Naive thymus-derived CD4-positive, alpha-beta T cell (primary cell): ENCODE measurements at regions of chr20 and their contacts with region 1.

Region 1: DNA sequence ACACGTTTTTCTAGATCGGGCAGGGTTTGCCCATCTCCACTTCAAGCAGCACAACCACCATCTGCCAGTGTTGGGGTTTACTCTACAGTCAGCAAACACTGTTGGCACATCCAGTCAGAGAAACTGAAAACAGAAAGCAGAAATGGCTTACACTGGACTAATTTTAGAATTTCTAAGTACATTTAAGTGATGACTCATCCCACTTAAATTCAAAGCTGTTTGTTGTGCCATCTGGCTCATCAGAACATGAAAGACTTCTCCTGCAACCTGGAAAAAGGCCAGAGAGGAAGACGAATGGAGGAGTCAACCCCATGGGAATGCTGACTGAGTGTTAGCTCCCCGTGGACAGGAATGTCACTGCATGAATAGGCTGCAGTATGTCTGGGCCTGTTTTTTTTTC is 21.8 kb downstream of the FAM209B start:
- DNase-seq: no peak
- ATAC-seq: peak; percentile 58
- H3K4me3 ChIP-seq: no peak overlapping the region
- H3K4me3 Mint-ChIP-seq: peak overlapping the region in 1 of 10 donors; percentile 37
- H3K27ac ChIP-seq: no peak overlapping the region
- H3K27ac Mint-ChIP-seq: no peak overlapping the region
- H3K4me1 ChIP-seq: no peaks in the 10 kb centered on the region
- H3K4me1 Mint-ChIP-seq: peaks cover 0 to 8% (median 0%) of the 10 kb centered on the region in 7 donors
- H3K27me3 ChIP-seq: no peaks in the 10 kb centered on the region
- H3K27me3 Mint-ChIP-seq: peaks cover 0 to 2% (median 0%) of the 10 kb centered on the region in 5 donors

Region 2: DNA sequence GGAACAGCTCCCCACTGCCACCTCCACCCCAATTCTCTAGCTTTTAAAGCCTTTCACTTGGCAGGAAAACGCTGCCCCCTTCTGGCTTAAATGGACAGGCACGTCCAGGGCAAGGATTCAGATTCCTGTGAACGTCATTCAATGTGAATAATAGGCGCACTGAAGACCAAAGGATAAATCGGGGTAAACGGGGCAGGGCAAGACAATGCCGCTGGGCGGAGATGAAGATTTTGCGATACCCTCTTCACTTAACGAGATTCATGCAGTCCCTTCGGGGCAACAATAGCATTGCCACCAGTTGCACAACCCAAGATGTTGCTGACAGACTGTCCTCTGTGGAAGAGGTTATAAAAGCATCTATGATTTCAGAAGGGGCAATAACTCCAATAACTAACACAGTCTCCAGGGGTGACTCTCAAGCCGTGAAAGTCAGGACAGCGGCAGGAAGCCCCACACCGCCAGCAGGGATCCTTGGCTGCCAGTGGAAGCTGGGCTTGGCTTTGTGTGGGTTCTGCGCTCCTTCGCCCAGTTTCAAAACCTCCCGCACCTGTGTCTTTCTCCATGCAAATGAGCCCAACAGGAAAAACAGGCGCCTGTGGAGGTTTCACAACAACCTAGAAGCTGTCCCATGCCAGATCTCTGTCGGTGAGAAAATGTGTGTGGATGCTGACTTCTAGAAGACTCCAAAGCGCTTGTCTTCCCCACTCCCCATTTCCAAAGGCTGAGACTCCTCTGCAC is 419.8 kb after region 1 on chr20:
- CTCF ChIA-PET with region 1: no interaction called
- POLR2A ChIA-PET with region 1: no interaction called
- intact Hi-C with region 1: loop called in 1 of 2 experiments (anchors 5 kb)
- DNase-seq: peak in 2 of 9 donors; percentile 1 to 4
- ATAC-seq: no peak
- H3K4me3 ChIP-seq: no peak overlapping the region
- H3K4me3 Mint-ChIP-seq: no peak overlapping the region
- H3K27ac ChIP-seq: no peak overlapping the region
- H3K27ac Mint-ChIP-seq: no peak overlapping the region
- H3K4me1 ChIP-seq: no peaks in the 10 kb centered on the region
- H3K4me1 Mint-ChIP-seq: peaks cover 0 to 4% (median 0%) of the 10 kb centered on the region in 7 donors
- H3K27me3 ChIP-seq: no peaks in the 10 kb centered on the region
- H3K27me3 Mint-ChIP-seq: peaks cover 35 to 88% (median 52%) of the 10 kb centered on the region in 5 donors

Region 3: DNA sequence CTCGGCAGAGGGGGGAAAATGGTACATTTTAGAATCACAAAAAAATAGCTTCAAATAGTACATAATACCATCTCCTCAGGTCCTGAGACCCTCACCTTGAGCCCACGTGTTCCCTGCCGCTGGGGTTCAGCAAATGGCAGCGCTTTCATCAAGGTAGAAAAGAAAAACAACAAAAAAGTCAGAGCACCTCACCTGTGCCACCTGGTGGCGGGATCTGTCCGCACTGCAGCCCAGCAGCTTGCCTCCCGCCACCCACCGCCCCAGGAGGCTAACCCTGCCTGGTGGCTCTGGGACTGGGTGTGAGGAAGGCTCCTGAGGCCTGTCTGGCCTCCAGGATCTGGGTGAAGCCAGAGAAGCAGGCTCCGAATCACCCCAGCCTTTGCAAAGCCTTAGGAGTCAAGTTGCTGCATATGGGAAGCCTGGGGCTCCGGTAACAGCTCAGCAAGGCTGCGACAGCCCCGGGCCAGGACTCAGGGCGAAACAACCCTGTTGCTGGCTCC is 440.8 kb after region 1 on chr20:
- CTCF ChIA-PET with region 1: no interaction called
- POLR2A ChIA-PET with region 1: no interaction called
- intact Hi-C with region 1: loop called in 1 of 2 experiments (anchors 1 kb)
- DNase-seq: no peak
- ATAC-seq: no peak
- H3K4me3 ChIP-seq: no peak overlapping the region
- H3K4me3 Mint-ChIP-seq: no peak overlapping the region
- H3K27ac ChIP-seq: no peak overlapping the region
- H3K27ac Mint-ChIP-seq: no peak overlapping the region
- H3K4me1 ChIP-seq: no peaks in the 10 kb centered on the region
- H3K4me1 Mint-ChIP-seq: no peaks in the 10 kb centered on the region
- H3K27me3 ChIP-seq: no peaks in the 10 kb centered on the region
- H3K27me3 Mint-ChIP-seq: peaks cover 0 to 23% (median 15%) of the 10 kb centered on the region in 5 donors

Region 4: GRCh38 chr20:57048027-57048869 is 493.4 kb after region 1 on chr20:
- CTCF ChIA-PET with region 1: no interaction called
- POLR2A ChIA-PET with region 1: no interaction called
- intact Hi-C with region 1: loop called in 1 of 2 experiments (anchors 1 kb)
- DNase-seq: peak in 2 of 9 donors; percentile 3 to 27
- ATAC-seq: no peak
- H3K4me3 ChIP-seq: no peak overlapping the region
- H3K4me3 Mint-ChIP-seq: no peak overlapping the region
- H3K27ac ChIP-seq: no peak overlapping the region
- H3K27ac Mint-ChIP-seq: no peak overlapping the region
- H3K4me1 ChIP-seq: no peaks in the 10 kb centered on the region
- H3K4me1 Mint-ChIP-seq: no peaks in the 10 kb centered on the region
- H3K27me3 ChIP-seq: no peaks in the 10 kb centered on the region
- H3K27me3 Mint-ChIP-seq: peaks cover 0 to 22% (median 4%) of the 10 kb centered on the region in 5 donors